ENCODE measurements at regions of chr16 and their contacts with region 1.

Region 1: GRCh38 chr16:1308977-1309885 is at the start of gene UBE2I:
- DNase-seq: peak; percentile 98
- ATAC-seq: peak; percentile 67
- H3K4me3 Mint-ChIP-seq: peak within 1 kb of the TSS; percentile 97
- H3K27ac Mint-ChIP-seq: peak within 1 kb of the TSS; percentile 99
- H3K4me1 Mint-ChIP-seq: peaks cover 47% of the 10 kb centered on the region
- H3K27me3 Mint-ChIP-seq: no peaks in the 10 kb centered on the region
- total RNA-seq, gene UBE2I: 251 to 358 TPM

Region 2: GRCh38 chr16:527006-527753 is 782.1 kb before region 1 on chr16 and contains the start of gene CAPN15:
- CTCF ChIA-PET with region 1: no interaction called
- POLR2A ChIA-PET with region 1: no interaction called
- intact Hi-C with region 1: loop called in 1 of 2 experiments (anchors 2 kb)
- DNase-seq: peak; percentile 91
- ATAC-seq: peak; percentile 71
- H3K4me3 Mint-ChIP-seq: peak within 1 kb of the TSS; percentile 94
- H3K27ac Mint-ChIP-seq: peak within 1 kb of the TSS; percentile 96
- H3K4me1 Mint-ChIP-seq: peaks cover 35% of the 10 kb centered on the region
- H3K27me3 Mint-ChIP-seq: no peaks in the 10 kb centered on the region
- total RNA-seq, gene CAPN15: 64.7 to 69.7 TPM

Region 3: GRCh38 chr16:970766-971581 is 338.3 kb before region 1 on chr16 and contains the start of gene LMF1:
- CTCF ChIA-PET with region 1: no interaction called
- POLR2A ChIA-PET with region 1: no interaction called
- intact Hi-C with region 1: loop called in 1 of 2 experiments (anchors 1 kb)
- DNase-seq: peak; percentile 98
- ATAC-seq: peak; percentile 93
- H3K4me3 Mint-ChIP-seq: peak within 1 kb of the TSS; percentile 76
- H3K27ac Mint-ChIP-seq: peak within 1 kb of the TSS; percentile 78
- H3K4me1 Mint-ChIP-seq: peaks cover 15% of the 10 kb centered on the region
- H3K27me3 Mint-ChIP-seq: no peaks in the 10 kb centered on the region
- total RNA-seq, gene LMF1: 9.5 to 12.2 TPM

Region 4: DNA sequence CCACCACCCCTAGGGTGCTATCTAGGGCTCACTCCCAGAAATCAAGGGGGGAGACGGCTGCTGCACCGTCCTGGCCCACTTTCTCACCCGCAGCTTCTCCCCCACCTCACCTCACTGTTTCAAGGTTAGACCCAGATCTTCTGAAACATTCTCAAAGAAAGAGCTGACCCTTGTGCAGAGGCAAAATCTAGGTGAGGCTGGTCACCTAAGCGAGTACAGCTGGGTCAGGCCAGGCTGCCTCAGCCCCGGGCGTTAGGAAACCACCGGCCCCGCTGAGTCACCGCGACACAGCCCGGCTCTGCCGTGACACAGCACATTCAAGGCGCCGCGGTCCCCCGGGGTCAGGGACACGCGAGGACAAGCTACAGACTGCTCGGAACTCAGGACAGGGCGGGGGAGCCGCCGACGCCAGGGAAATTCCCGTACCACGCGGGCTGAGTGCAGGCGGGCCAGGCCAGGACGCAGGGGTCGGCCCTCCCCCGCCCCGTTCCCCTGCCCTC is 69.6 kb after region 1 on chr16:
- CTCF ChIA-PET with region 1: no interaction called
- POLR2A ChIA-PET with region 1: no interaction called
- intact Hi-C with region 1: loop called in 1 of 2 experiments (anchors 1 kb)
- DNase-seq: peak; percentile 87
- ATAC-seq: peak; percentile 74
- H3K4me3 Mint-ChIP-seq: peak overlapping the region; percentile 87
- H3K27ac Mint-ChIP-seq: peak overlapping the region; percentile 91
- H3K4me1 Mint-ChIP-seq: peaks cover 17% of the 10 kb centered on the region
- H3K27me3 Mint-ChIP-seq: no peaks in the 10 kb centered on the region

Region 5: DNA sequence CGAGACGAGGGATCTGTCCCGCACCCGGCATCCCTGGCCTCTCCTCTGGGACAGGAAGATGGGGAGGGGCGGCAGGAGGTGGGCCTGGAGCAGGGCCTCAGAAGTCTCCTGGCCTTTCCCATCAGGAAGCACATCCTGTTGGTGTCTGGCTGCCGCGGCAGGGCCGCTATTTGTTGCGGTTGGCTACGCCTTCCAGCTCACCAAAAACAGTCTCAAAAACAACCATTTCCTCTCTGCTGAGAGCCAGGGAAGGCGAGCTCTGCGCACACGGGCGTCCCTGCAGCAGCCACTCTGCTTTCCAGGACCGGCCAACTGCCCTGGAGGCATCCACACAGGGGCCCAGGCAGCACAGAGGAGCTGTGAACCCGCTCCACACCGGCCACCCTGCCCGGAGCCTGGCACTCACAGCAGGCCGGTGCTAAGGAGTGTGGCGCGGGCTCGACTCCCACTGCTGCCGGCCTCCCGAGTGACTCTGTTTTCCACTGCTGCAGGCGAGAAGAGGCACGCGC is 224.3 kb after region 1 on chr16 and contains the start of gene TMEM204:
- CTCF ChIA-PET with region 1: no interaction called
- POLR2A ChIA-PET with region 1: interaction called, 6 read pairs
- intact Hi-C with region 1: loop called in 1 of 2 experiments (anchors 2 kb)
- DNase-seq: peak; percentile 66
- ATAC-seq: peak; percentile 25
- H3K4me3 Mint-ChIP-seq: peak within 1 kb of the TSS; percentile 95
- H3K27ac Mint-ChIP-seq: peak within 1 kb of the TSS; percentile 94
- H3K4me1 Mint-ChIP-seq: peaks cover 39% of the 10 kb centered on the region
- H3K27me3 Mint-ChIP-seq: no peaks in the 10 kb centered on the region
- total RNA-seq, gene TMEM204: 12.6 to 17.5 TPM

Region 6: DNA sequence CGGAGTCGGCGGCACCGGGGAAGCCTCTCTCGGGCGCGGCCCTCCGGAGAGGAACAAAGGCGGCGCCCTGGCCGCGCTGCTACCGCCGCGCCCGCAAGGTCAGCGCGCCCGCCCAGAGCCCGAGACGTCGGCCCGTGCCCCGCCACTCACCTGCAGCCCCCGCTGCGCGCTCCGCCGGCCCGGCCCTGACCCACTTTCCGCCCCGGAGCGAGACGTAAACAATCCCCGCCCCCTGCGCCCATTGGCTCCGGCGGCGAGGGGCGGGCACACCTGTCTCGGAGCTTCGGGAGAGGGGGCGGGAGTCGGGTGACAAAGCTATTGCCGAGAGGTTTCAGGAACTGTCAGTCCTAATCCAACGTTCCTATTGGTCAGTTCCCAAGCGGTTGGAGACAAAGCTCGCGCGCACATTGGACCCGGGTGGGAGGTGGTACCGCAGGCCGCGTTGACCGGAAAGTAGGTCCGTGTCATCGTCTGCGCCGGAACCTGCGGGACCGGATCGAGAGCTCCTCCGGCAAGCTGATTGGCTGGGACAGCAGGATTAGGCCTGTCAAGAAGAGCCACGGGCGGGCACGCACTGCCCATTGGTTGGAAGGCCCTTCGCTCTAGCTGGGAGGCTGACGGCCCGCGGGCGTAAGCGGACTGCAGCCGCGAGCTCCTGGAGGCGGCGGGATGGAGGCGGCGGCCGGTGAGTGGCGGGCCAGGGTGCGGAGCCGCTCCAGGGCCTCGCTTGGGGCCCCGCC is 473.3 kb after region 1 on chr16 and contains the starts of genes NUBP2 and SPSB3:
- CTCF ChIA-PET with region 1: no interaction called
- POLR2A ChIA-PET with region 1: no interaction called
- intact Hi-C with region 1: loop called in 1 of 2 experiments (anchors 1 kb)
- DNase-seq: peak; percentile 99
- ATAC-seq: peak; percentile 93
- H3K4me3 Mint-ChIP-seq: peak within 1 kb of the TSS; percentile 94
- H3K27ac Mint-ChIP-seq: peak within 1 kb of the TSS; percentile 85
- H3K4me1 Mint-ChIP-seq: peaks cover 26% of the 10 kb centered on the region
- H3K27me3 Mint-ChIP-seq: no peaks in the 10 kb centered on the region
- total RNA-seq, gene NUBP2: 34.4 to 42.4 TPM
- total RNA-seq, gene SPSB3: 12.5 to 13.6 TPM

Region 7: GRCh38 chr16:2386990-2387389 is 1077.8 kb after region 1 on chr16:
- CTCF ChIA-PET with region 1: no interaction called
- POLR2A ChIA-PET with region 1: no interaction called
- intact Hi-C with region 1: no loop called
- DNase-seq: no peak
- ATAC-seq: no peak
- H3K4me3 Mint-ChIP-seq: no peak overlapping the region
- H3K27ac Mint-ChIP-seq: no peak overlapping the region
- H3K4me1 Mint-ChIP-seq: no peaks in the 10 kb centered on the region
- H3K27me3 Mint-ChIP-seq: peaks cover 7% of the 10 kb centered on the region

Measured in activated CD4-positive, alpha-beta T cell treated with anti-CD3 and anti-CD28 coated beads for 36 hours (primary cell).